ENCODE measurements at regions of chr13 and their contacts with region 1.

Region 1: DNA sequence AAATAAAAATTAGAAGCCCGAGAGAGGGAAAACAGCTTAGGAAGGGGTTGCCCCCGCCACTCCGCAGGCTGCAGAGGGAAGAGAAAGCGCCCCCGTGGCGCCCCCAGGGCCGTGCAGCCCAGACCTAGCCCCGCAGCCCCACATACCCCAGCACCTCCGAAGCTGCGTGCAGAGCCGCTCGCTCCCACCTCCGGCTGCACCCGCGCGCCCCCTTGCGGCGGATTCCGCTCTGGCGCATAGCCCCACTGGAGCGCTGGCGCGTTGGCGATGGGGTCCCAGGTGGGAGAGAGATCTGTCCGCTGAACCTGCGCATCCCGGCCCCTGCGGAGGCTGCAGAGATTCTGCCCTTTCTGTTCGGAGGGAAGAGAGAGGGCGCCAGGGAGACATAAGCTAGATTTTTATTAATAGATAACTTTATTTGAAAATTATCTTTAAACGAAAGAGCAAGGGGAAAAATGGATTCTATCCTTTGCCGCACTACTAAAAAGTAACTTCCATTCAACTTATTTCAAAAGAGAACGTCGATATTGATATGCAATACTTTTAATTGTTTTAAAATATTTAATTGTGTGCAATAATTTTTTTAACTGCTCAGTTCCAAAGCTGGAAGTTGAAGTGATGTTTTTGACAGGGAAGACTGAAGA is 11.7 kb upstream of the CLN5 start:
- DNase-seq: peak; percentile 93
- ATAC-seq: peak; percentile 100
- H3K4me3 Mint-ChIP-seq: peak overlapping the region; percentile 51
- H3K27ac Mint-ChIP-seq: no peak overlapping the region
- H3K4me1 Mint-ChIP-seq: peaks cover 7% of the 10 kb centered on the region
- H3K27me3 Mint-ChIP-seq: peaks cover 20% of the 10 kb centered on the region

Region 2: GRCh38 chr13:75870397-75870903 is 1109.7 kb before region 1 on chr13:
- CTCF ChIA-PET with region 1: no interaction called
- POLR2A ChIA-PET with region 1: no interaction called
- intact Hi-C with region 1: loop called (anchors 5 to 10 kb)
- DNase-seq: peak; percentile 10
- ATAC-seq: peak; percentile 27
- H3K4me3 Mint-ChIP-seq: no peak overlapping the region
- H3K27ac Mint-ChIP-seq: peak overlapping the region; percentile 58
- H3K4me1 Mint-ChIP-seq: peaks cover 19% of the 10 kb centered on the region
- H3K27me3 Mint-ChIP-seq: peaks cover 8% of the 10 kb centered on the region

Region 3: DNA sequence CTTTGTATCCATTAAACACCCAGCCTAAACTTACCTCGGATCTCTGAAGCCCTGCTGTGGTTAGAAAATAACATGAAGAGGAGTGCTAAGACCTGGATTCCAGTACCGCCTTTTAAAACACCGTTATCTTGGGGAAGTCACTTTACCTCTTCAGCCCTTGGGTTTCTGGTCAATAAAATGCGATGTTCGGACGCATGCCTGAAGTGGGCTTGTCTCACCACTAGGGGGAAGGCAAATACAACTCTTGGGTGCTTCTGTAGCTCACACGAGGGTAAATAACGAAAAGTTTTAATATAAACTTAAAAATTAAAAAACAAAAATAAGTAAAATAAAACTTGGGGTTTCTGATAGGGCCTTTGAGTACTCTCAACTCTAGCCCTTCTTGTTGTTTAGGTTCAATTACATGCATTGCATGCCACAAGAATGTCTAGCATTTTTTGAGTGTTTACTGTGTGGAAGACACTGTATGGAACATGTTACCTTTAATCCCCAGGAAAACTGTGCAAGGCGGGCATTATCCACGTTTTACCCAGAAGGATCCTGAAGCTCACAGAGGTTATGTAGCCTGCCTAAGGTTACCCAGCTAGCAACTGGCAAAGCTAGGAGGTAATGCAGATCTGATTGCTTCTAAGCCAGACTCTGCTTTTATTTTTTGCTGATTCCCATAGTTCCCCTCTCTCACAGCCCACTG is 1103.7 kb before region 1 on chr13:
- CTCF ChIA-PET with region 1: no interaction called
- POLR2A ChIA-PET with region 1: no interaction called
- intact Hi-C with region 1: loop called (anchors 5 to 10 kb)
- DNase-seq: peak; percentile 71
- ATAC-seq: peak; percentile 90
- H3K4me3 Mint-ChIP-seq: no peak overlapping the region
- H3K27ac Mint-ChIP-seq: no peak overlapping the region
- H3K4me1 Mint-ChIP-seq: peaks cover 13% of the 10 kb centered on the region
- H3K27me3 Mint-ChIP-seq: peaks cover 3% of the 10 kb centered on the region

Region 4: GRCh38 chr13:76667551-76667950 is 312.6 kb before region 1 on chr13:
- CTCF ChIA-PET with region 1: no interaction called
- POLR2A ChIA-PET with region 1: no interaction called
- intact Hi-C with region 1: loop called in 1 of 2 experiments (anchors 5 kb)
- DNase-seq: peak; percentile 9
- ATAC-seq: peak; percentile 88
- H3K4me3 Mint-ChIP-seq: no peak overlapping the region
- H3K27ac Mint-ChIP-seq: no peak overlapping the region
- H3K4me1 Mint-ChIP-seq: no peaks in the 10 kb centered on the region
- H3K27me3 Mint-ChIP-seq: peaks cover under 1% of the 10 kb centered on the region

Region 5: GRCh38 chr13:76745261-76746200 is 234.7 kb before region 1 on chr13:
- CTCF ChIA-PET with region 1: no interaction called
- POLR2A ChIA-PET with region 1: interaction called, 12 read pairs
- intact Hi-C with region 1: no loop called
- DNase-seq: no peak
- ATAC-seq: no peak
- H3K4me3 Mint-ChIP-seq: no peak overlapping the region
- H3K27ac Mint-ChIP-seq: no peak overlapping the region
- H3K4me1 Mint-ChIP-seq: no peaks in the 10 kb centered on the region
- H3K27me3 Mint-ChIP-seq: peaks cover 2% of the 10 kb centered on the region

Region 6: GRCh38 chr13:76822698-76823267 is 157.4 kb before region 1 on chr13:
- CTCF ChIA-PET with region 1: interaction called, 4 read pairs
- POLR2A ChIA-PET with region 1: no interaction called
- intact Hi-C with region 1: loop called (anchors 2 to 10 kb)
- DNase-seq: peak; percentile 10
- ATAC-seq: peak; percentile 88
- H3K4me3 Mint-ChIP-seq: no peak overlapping the region
- H3K27ac Mint-ChIP-seq: no peak overlapping the region
- H3K4me1 Mint-ChIP-seq: no peaks in the 10 kb centered on the region
- H3K27me3 Mint-ChIP-seq: peaks cover 2% of the 10 kb centered on the region

Region 7: DNA sequence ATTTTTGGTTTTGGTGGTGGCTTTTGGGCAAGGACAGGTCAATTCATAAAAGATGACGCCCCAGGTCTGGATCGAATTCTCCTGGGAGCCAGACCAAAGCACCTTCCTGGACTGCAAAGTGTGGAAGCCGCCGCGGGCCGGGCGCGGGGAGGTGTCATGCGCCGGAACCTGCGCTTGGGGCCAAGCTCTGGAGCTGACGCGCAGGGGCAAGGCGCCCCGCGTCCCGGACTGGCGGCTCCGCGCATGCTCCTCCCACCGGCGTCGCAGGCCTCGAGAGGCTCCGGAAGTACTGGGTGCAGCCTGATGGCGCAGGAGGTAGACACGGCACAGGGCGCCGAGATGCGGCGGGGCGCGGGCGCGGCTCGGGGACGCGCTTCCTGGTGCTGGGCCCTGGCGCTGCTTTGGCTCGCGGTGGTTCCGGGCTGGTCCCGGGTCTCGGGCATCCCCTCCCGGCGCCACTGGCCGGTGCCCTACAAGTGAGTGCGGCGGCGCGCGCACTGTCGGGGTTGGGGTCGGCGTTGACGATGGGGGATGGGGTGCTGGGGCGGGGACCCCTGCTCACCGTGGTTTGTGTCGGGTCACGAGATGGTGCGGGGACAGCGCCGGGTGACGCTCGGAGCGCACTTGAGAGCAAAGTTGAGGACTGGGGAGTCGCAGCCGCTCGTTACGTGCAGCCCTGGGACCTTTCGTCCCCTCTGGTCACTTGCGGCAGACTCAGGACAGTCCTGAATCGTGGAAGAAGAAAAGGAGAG is 11.8 kb after region 1 on chr13 and contains the start of gene CLN5:
- CTCF ChIA-PET with region 1: interaction called, 18 read pairs
- POLR2A ChIA-PET with region 1: no interaction called
- intact Hi-C with region 1: no loop called
- DNase-seq: peak; percentile 97
- ATAC-seq: peak; percentile 93
- H3K4me3 Mint-ChIP-seq: peak within 1 kb of the TSS; percentile 97
- H3K27ac Mint-ChIP-seq: peak within 1 kb of the TSS; percentile 99
- H3K4me1 Mint-ChIP-seq: peaks cover 36% of the 10 kb centered on the region
- H3K27me3 Mint-ChIP-seq: peaks cover 3% of the 10 kb centered on the region
- total RNA-seq, gene CLN5: 14.5 to 14.9 TPM

Region 8: DNA sequence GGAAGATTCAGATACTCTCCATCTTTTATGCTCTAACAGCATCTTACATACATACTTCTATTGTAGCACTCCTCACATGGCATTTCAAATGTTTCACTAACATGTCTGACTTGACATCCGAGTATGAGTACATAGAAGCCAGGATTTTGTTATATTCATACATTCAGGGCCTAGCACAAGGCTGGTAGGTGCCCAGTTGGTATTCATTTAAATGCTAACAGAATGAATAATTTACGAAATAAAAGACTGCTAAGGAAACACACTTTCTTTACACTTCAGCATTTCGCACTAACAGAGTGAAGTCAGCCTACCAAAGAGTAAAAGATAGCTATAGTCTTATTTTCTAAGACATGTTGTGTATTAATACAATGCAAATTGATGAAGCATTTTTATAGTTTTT is 114.6 kb after region 1 on chr13:
- CTCF ChIA-PET with region 1: no interaction called
- POLR2A ChIA-PET with region 1: no interaction called
- intact Hi-C with region 1: no loop called
- DNase-seq: no peak
- ATAC-seq: no peak
- H3K4me3 Mint-ChIP-seq: no peak overlapping the region
- H3K27ac Mint-ChIP-seq: no peak overlapping the region
- H3K4me1 Mint-ChIP-seq: no peaks in the 10 kb centered on the region
- H3K27me3 Mint-ChIP-seq: no peaks in the 10 kb centered on the region

Measured in activated CD4-positive, alpha-beta T cell treated with anti-CD3 and anti-CD28 coated beads for 36 hours (primary cell).